ENCODE measurements at regions of chr7 and their contacts with region 1.

Region 1: DNA sequence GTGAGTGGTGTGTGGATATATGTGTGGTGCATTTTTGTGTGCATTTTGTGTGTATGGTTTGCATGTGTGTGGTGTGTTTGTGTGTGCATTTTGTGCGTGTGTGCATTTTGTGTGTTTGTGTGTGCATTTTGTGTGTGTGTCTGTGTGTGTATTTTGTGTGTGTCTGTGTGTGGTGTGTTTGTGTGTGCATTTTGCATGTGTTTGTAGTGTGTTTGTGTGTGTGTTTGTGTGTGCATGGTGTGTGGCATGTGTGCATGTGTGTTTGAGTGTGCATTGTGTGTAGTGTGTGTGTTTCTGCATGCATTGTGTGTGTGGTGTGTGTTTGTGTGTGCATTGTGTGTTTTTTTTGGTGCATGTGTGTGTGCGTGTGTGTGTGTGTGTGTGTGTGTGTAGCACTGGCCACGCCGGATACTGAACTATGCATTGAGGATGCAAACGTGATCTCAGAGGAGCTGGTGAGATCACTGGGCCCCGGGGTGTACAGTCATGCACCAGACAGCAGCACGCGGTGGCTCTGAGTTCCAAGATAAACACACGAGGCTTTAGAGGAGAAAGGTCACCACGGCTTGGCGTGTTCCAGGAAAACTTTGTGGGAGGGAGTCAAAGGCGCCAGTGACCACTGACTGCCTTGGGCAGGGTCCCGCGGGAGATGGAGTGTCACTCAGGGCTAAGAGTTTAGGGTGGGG is 106.6 kb upstream of the SHH start:
- DNase-seq: peak; percentile 94
- ATAC-seq: peak; percentile 76
- H3K4me3 ChIP-seq: peak overlapping the region; percentile 7; the same call in 1 of the 2 replicates
- H3K27ac ChIP-seq: peak overlapping the region; percentile 76
- H3K4me1 ChIP-seq: peaks cover 54% of the 10 kb centered on the region
- H3K27me3 ChIP-seq: no peaks in the 10 kb centered on the region
- CTCF ChIP-seq: no peak

Region 2: DNA sequence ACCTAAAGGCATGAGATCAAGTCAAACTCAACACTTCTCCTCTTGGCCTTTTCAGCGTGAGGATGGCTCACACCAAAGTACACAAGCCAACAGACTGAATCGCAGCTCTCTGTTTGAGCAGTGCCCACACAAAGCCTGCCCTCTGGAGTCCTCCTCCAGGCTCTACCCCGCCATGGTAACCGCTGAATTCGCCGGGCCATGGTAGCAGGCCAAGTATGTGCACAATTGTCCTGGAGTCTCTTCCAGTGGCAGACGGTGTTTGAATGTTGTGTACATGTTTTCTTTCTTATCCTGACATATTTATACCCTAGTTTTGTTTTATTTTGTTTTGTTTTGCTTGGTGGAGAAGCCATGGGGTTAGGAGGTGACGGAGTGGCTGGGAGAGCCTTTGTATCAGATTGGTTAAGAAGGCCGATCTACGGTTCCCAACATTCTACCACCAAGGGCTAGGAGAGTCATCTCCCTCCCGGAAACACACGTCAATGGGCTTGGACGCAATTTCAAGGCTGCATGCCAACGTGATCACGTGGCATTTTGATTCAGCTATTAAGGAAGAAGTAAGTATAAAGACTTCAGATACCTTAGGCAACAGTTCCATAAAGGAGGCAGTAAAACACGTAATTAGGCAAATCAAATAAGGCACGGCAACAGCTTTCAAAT is 94.5 kb before region 1 on chr7:
- CTCF ChIA-PET with region 1: no interaction called
- POLR2A ChIA-PET with region 1: no interaction called
- intact Hi-C with region 1: no loop called
- DNase-seq: peak; percentile 85
- ATAC-seq: peak; percentile 87
- H3K4me3 ChIP-seq: no peak overlapping the region
- H3K27ac ChIP-seq: 0 out of 2 replicates have a peak overlapping the region, but pooled peaks have one; percentile 18
- H3K4me1 ChIP-seq: peaks cover 15% of the 10 kb centered on the region
- H3K27me3 ChIP-seq: no peaks in the 10 kb centered on the region
- CTCF ChIP-seq: no peak

Region 3: GRCh38 chr7:155860840-155861479 is 57.9 kb before region 1 on chr7:
- CTCF ChIA-PET with region 1: no interaction called
- POLR2A ChIA-PET with region 1: no interaction called
- intact Hi-C with region 1: loop called (anchors 2 kb)
- DNase-seq: peak; percentile 90
- ATAC-seq: peak; percentile 29
- H3K4me3 ChIP-seq: peak overlapping the region; percentile 44
- H3K27ac ChIP-seq: peak overlapping the region; percentile 66
- H3K4me1 ChIP-seq: peaks cover 42% of the 10 kb centered on the region
- H3K27me3 ChIP-seq: no peaks in the 10 kb centered on the region
- CTCF ChIP-seq: no peak

Region 4: GRCh38 chr7:155877123-155877522 is 41.7 kb before region 1 on chr7:
- CTCF ChIA-PET with region 1: no interaction called
- POLR2A ChIA-PET with region 1: no interaction called
- intact Hi-C with region 1: loop called (anchors 2 kb)
- DNase-seq: peak; percentile 59
- ATAC-seq: peak; percentile 88
- H3K4me3 ChIP-seq: no peak overlapping the region
- H3K27ac ChIP-seq: peak overlapping the region; percentile 43; the same call in 1 of the 2 replicates
- H3K4me1 ChIP-seq: peaks cover 16% of the 10 kb centered on the region
- H3K27me3 ChIP-seq: no peaks in the 10 kb centered on the region
- CTCF ChIP-seq: no peak

Region 5: GRCh38 chr7:155896531-155897263 is 22.2 kb before region 1 on chr7:
- CTCF ChIA-PET with region 1: no interaction called
- POLR2A ChIA-PET with region 1: no interaction called
- intact Hi-C with region 1: no loop called
- DNase-seq: peak; percentile 88
- ATAC-seq: peak; percentile 95
- H3K4me3 ChIP-seq: 0 out of 2 replicates have a peak overlapping the region, but pooled peaks have one; percentile 12
- H3K27ac ChIP-seq: peak overlapping the region; percentile 19; the same call in 1 of the 2 replicates
- H3K4me1 ChIP-seq: peaks cover 23% of the 10 kb centered on the region
- H3K27me3 ChIP-seq: no peaks in the 10 kb centered on the region
- CTCF ChIP-seq: no peak

Region 6: GRCh38 chr7:156006024-156006423 is 87.2 kb after region 1 on chr7:
- CTCF ChIA-PET with region 1: no interaction called
- POLR2A ChIA-PET with region 1: no interaction called
- intact Hi-C with region 1: loop called (anchors 2 kb)
- DNase-seq: peak; percentile 30
- ATAC-seq: peak; percentile 85
- H3K4me3 ChIP-seq: no peak overlapping the region
- H3K27ac ChIP-seq: no peak overlapping the region
- H3K4me1 ChIP-seq: no peaks in the 10 kb centered on the region; the same call in 1 of the 2 replicates
- H3K27me3 ChIP-seq: no peaks in the 10 kb centered on the region
- CTCF ChIP-seq: no peak